Posterior cingulate gyrus (tissue), 11 donors: ENCODE measurements at regions of chr4 and their contacts with region 1.

Region 1: GRCh38 chr4:39458505-39459300 is at the starts of genes LIAS and RPL9:
- DNase-seq: peak; percentile 84 to 99 (median 90)

Region 2: DNA sequence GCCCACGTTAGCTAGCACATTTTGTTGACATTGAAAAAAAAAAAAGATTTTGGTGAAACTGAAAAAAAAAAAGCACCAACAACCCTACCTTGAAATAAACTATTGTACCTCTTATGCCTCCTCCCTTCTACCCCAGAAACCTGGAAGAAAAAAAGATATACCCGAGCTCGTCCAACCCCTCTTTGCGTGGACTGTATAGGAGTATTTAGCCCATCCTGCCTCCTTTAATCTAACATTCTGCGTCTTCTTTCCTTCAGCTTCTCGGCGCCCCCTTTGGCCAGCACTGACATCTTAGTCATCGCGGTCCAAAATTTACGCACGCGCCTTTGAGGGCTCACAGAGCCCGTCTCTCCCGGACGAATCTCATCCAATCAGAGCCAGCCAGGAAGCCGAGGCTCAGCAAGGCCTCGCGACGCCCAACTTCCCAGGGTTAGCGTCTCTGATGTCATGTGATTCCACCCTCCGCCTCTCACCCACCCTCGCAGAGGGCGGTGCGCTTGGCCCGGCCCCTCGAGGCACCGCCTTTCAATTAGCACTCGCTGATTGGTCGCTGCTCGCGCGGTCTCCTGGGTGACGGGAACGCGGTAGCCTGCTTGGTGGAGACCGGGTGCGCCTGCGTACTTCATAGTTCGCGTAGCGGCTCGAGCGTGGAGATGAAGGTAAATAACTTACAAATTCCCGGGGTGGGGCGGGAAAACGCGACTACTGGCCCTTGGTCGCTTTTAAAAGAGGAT is 276.6 kb before region 1 on chr4 and contains the start of gene WDR19:
- intact Hi-C with region 1: loop called (anchors 10 kb)
- DNase-seq: peak; percentile 99 to 100 (median 100)

Region 3: DNA sequence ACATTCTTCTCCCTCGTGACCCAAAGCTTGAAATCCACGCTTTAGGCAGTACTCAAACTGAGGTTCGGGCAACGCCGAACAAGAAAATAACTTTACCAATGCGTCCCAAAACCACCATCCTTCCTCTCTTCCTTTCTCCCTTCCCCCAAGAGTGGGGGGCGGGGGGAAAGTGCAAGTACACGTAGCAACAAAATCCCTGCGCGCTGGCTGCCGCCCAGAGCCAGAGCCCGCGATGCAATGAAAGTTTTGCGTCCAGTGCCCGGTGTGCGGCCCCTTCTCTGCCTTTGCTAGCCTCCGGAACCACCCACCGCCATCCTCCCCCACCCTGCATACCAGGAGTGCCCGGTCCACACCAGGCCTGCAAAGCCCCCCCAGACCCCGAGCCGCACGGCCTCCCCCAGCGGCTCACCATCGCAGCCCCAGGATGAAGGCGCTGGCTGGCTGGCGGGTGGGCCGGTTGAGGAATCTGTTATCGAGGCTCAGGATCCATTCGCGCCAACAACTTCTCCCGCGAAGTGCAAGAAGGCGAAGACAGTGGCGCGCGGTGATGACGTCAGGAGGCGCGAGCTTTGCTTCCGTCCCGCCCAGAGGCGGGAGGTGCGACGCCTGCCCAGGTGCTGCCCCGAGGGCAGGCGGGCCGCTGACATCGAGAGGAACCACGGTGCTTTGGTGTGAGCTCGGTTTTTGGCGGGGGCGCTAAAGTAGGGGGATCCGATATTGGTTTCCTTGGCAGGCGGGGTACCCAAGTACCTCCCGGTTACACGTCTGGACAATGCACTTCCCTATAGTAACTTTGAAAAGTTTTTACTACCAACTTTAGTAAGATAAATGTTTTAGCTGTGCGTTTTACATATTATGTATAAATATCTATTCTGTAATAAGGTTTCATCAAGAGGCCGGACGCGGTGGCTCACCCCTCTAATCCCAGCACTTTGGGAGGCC is 92.6 kb before region 1 on chr4 and contains the start of gene RFC1:
- intact Hi-C with region 1: loop called (anchors 5 kb)
- DNase-seq: peak; percentile 81 to 97 (median 86)

Region 4: GRCh38 chr4:40046311-40046980 is 587.7 kb after region 1 on chr4:
- intact Hi-C with region 1: no loop called
- DNase-seq: no peak